Ascending aorta (tissue), 2 donors: ENCODE measurements at regions of chr1 and their contacts with region 1.

Region 1: DNA sequence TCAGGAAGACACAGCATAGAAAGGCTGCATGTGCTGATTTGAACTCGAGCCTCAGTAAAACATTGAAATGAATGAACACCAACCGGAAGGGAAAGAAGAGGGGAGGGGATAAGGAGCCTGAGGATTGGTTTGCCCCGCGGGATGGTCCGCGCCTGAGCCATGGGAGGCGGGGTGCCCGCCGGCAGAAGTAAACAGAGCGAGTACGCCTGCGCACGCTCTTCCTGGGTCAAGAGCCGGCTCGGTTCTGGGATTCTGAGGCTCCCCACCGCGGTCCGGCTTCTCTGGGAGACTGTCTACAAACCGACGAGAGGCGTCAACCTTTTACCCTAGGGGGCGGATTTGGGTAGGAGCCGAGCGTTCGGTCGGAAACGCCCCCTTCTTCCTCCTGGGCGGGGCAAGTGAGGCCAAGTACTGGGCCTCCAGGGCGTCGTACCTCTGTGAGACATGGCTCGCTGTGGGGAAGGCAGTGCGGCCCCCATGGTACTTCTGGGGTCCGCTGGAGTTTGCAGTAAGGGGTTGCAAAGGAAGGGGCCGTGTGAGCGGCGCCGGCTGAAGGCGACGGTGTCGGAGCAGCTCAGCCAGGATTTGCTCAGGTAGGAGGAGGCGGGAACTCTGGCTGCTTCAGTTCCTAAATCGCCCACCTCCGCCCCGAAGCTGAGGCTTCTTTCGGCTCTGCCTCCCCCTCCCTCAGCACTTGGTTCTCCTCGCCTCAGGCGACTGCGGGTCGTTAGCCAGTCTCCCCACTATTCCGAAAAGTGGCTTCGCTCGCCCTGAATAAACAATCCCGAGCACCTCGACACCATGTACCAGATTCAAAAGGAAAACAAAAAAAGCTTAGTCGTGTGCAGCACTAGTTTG is at the start of gene BTBD8:
- DNase-seq: peak; percentile 47 to 91
- H3K4me3 ChIP-seq: peak within 1 kb of the TSS; percentile 62 to 89
- H3K27ac ChIP-seq: peak within 1 kb of the TSS; percentile 63 to 69
- H3K4me1 ChIP-seq: peaks cover 3 to 8% of the 10 kb centered on the region in 2 donors
- H3K27me3 ChIP-seq: no peaks in the 10 kb centered on the region
- CTCF ChIP-seq: no peak
- total RNA-seq, gene BTBD8: 3.6 TPM

Region 2: DNA sequence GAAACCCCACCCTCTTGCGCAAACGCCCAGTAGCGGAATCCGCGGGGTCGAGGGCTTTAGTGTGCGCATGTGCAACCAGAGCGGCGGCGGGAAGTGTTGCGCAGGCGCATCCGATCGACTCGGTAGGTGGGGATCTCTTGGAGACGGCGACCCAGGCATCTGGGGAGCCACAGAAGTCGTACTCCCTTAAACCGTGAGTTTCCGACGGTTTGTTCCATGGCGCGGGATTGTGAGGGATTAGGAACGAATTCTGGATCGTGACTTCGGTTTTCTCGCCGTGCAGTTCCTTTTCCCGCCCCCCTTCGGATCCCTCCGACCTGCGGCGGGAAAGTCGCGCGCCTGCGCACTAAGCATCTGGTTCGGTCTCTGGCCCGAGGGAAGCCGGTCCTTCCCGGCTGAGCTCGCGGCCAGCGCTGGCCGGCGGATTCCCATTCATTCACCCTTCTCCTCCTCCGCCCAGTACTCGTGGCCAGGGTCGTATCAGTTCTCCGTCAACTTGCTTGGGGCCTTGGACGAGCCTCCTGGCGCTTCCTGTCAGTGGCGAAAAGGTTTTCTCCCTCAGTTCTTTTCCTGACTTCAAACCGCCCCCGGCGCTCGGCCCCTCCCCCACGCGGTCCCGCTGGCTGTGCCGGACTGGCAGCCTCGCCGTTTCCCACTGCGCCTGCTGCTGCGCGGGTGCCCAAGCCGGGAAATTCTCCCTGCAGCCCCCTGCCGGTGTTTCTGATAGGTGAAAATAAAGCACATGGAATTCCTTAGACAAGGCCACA is 579.4 kb before region 1 on chr1 and contains the start of gene CDC7:
- intact Hi-C with region 1: loop called (anchors 10 kb)
- DNase-seq: peak; percentile 29 to 94
- H3K4me3 ChIP-seq: peak within 1 kb of the TSS; percentile 61 to 82
- H3K27ac ChIP-seq: peak within 1 kb of the TSS; percentile 68 to 78
- H3K4me1 ChIP-seq: no peaks in the 10 kb centered on the region
- H3K27me3 ChIP-seq: no peaks in the 10 kb centered on the region
- CTCF ChIP-seq: peak in 1 of 3 experiments; percentile 26
- total RNA-seq, gene CDC7: 2.7 TPM

Region 3: GRCh38 chr1:92230736-92231135 is 150.4 kb after region 1 on chr1:
- intact Hi-C with region 1: no loop called
- DNase-seq: no peak
- H3K4me3 ChIP-seq: no peak overlapping the region
- H3K27ac ChIP-seq: no peak overlapping the region
- H3K4me1 ChIP-seq: no peaks in the 10 kb centered on the region
- H3K27me3 ChIP-seq: no peaks in the 10 kb centered on the region
- CTCF ChIP-seq: no peak

Region 4: GRCh38 chr1:92277105-92277723 is 196.9 kb after region 1 on chr1:
- intact Hi-C with region 1: no loop called
- DNase-seq: no peak
- H3K4me3 ChIP-seq: no peak overlapping the region
- H3K27ac ChIP-seq: no peak overlapping the region
- H3K4me1 ChIP-seq: no peaks in the 10 kb centered on the region
- H3K27me3 ChIP-seq: no peaks in the 10 kb centered on the region
- CTCF ChIP-seq: no peak